ENCODE measurements at regions of chr1 and their contacts with region 1.

Region 1: DNA sequence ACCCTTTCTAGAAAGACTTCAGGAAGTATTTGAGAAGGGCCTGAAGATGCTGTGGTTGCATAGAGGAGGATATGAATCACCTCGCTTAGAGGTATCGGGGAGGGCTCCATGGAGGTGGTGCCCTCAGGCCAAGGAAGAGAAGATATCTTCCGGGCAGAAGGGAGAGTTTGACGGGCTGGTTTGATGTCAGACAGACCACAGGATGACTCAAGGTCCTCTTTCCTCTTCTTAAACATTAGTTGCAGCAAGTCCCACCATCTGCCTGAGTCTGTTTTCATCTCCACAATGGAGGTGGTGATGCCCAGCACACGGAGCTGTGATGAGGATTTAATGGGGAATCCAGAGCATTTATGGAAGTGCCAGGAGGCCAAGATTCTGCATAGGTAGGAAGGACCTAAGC is 25.1 kb upstream of the RUNX3 start:
- DNase-seq: peak; percentile 89
- ATAC-seq: peak; percentile 85
- H3K4me3 Mint-ChIP-seq: peak overlapping the region; percentile 94
- H3K27ac Mint-ChIP-seq: peak overlapping the region; percentile 99
- H3K4me1 Mint-ChIP-seq: peaks cover 93% of the 10 kb centered on the region
- H3K27me3 Mint-ChIP-seq: no peaks in the 10 kb centered on the region

Region 2: DNA sequence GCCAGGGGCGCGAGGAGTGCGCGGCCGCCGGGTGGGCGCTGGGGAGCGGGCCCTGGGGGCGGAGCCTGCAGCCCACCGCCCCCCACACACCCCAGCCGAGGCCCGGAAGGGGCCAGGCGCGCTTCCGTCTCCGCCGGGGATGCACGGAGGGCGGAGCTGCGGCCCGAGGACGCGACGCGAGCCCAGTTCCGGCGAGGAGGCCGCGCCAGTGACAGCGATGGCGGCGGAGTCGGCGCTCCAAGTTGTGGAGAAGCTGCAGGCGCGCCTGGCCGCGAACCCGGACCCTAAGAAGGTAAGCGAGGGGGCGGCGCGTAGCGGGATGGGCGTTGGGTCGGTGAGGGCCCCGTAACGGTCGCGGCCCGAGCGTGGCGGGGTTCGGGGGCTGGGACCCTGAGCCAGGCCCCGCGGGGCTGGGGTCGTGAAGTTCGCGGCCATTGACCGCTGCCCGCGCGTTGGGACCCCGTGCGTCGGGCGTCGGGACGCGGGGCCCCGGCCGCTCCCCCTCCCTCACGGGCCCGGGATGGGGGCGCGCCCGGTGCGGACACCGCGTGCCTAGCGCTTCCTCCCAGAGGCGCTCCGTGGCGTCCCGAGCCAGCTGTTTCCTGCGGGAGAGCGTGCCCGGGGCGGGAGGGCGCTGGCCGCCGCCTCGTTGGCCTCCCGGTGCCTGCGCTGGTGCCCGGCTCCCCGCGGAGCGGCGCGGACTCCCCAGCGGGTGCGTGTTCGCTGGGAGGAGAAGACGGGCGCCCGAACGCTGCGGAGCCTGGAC is 1211.7 kb before region 1 on chr1 and contains the start of gene ELOA:
- CTCF ChIA-PET with region 1: no interaction called
- POLR2A ChIA-PET with region 1: no interaction called
- intact Hi-C with region 1: no loop called
- DNase-seq: peak; percentile 88
- ATAC-seq: peak; percentile 94
- H3K4me3 Mint-ChIP-seq: peak within 1 kb of the TSS; percentile 87
- H3K27ac Mint-ChIP-seq: peak within 1 kb of the TSS; percentile 91
- H3K4me1 Mint-ChIP-seq: peaks cover 42% of the 10 kb centered on the region
- H3K27me3 Mint-ChIP-seq: no peaks in the 10 kb centered on the region
- total RNA-seq, gene ELOA: 34.5 to 38.6 TPM

Region 3: GRCh38 chr1:24919791-24920532 is 35.2 kb before region 1 on chr1:
- CTCF ChIA-PET with region 1: no interaction called
- POLR2A ChIA-PET with region 1: interaction called, 6 read pairs
- intact Hi-C with region 1: loop called in 1 of 2 experiments (anchors 1 kb)
- DNase-seq: peak; percentile 90
- ATAC-seq: peak; percentile 38
- H3K4me3 Mint-ChIP-seq: peak overlapping the region; percentile 54
- H3K27ac Mint-ChIP-seq: peak overlapping the region; percentile 97
- H3K4me1 Mint-ChIP-seq: peaks cover 69% of the 10 kb centered on the region
- H3K27me3 Mint-ChIP-seq: no peaks in the 10 kb centered on the region

Region 4: DNA sequence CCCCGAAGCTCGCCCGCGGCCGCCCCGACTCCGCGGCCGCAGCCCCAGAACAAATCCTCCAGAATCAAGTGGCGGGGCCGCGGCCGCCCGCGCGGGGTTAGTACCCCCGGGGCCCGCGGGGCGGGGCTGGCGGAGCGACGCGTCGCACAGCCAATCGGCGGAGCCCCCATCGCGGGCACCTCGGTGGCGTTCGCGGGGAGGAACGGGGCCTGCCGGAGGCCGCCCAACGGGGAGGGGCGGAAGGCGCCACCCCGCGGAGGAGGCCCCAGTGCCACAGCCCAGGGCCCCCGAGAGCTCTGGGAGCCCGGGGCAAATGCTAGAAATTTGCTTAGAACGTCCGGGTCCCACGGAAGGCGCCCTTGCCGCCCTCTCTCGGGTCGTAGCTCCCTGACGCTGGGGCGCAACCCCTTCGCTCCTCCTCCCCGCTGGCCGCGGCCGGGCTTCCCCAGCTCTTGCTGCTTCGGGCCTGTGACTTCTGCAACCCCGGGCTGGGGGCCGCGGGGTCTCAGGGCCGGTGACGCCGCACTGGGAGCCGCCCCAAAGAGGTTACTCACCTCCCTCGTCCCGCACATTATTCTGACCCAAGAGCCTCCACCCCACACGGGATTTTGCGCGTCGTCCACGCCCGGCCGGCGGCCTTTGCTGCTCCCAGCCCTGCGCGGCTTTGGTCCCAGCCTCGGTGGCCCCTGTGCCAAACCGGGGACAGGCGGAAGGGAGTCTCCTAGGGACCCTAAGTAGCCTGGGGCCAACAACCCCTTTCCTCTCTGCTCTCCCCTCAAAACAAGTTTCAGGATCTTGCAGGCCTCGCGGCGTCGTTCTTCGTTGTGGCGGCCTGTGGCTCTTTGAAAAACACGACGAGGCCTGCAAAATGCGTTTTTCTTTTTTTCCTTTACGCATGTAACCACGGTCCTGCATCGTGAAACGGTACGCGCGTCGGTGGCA is 24.7 kb before region 1 on chr1 and contains the start of gene RUNX3:
- CTCF ChIA-PET with region 1: interaction called, 17 read pairs
- POLR2A ChIA-PET with region 1: interaction called, 8 read pairs
- intact Hi-C with region 1: loop called (anchors 1 kb)
- DNase-seq: peak; percentile 96
- ATAC-seq: peak; percentile 88
- H3K4me3 Mint-ChIP-seq: peak within 1 kb of the TSS; percentile 80
- H3K27ac Mint-ChIP-seq: peak within 1 kb of the TSS; percentile 91
- H3K4me1 Mint-ChIP-seq: peaks cover 66% of the 10 kb centered on the region
- H3K27me3 Mint-ChIP-seq: no peaks in the 10 kb centered on the region
- total RNA-seq, gene RUNX3: 156 to 167 TPM

Region 5: DNA sequence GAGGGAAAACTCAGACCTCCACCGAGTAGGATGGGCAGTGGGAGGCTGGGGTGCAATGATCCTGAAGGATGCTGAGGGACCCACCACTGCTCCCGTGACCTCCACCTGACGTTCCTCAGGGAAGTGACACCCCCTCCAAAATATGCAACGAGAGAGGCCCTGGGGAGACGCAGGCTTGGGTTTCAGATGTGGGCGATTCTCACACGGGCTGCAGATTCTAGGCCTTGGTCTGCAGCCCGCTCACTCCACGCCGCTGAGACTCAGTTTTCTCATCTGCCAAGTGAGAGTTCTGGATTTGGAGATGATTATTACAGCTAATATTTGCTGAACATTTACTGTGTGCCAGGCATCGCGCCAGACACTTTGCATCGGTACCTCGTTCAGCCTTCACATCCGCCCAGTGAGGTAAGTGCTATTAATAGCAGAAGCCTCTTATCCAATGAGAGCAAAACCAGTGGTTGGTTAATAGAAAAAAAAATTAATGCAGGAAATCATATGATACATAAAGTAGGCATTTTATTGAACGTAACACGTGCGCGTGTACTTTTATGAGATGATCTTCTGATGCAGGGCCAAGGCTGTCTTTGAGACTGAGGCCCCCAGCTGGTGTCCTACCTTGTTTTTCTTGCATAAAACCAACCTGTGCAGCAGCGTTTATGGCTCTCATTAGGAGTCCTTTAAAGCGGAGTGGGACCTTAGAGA is 77.0 kb after region 1 on chr1:
- CTCF ChIA-PET with region 1: interaction called, 96 read pairs
- POLR2A ChIA-PET with region 1: interaction called, 4 read pairs
- intact Hi-C with region 1: loop called (anchors 1 to 2 kb)
- DNase-seq: peak; percentile 70
- ATAC-seq: peak; percentile 25
- H3K4me3 Mint-ChIP-seq: no peak overlapping the region
- H3K27ac Mint-ChIP-seq: no peak overlapping the region
- H3K4me1 Mint-ChIP-seq: peaks cover 74% of the 10 kb centered on the region
- H3K27me3 Mint-ChIP-seq: no peaks in the 10 kb centered on the region

Region 6: DNA sequence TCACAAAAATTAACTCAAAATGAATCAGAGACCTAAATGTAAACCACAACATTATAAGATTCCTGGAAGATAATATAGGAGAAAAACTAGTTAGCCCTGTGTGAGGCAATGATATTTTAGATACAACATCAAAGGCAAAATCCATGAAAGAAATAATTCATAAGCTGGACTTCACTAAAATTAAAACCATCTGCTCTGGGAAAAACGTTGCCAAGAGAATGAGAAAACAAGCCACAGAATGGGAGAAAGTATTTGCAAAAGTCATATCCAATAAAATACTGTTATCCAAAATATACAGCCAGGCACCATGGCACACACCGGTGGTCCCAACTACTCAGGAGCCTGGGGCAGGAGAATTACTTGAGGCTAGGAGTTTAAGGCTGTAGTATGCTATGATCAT is 206.8 kb after region 1 on chr1:
- CTCF ChIA-PET with region 1: no interaction called
- POLR2A ChIA-PET with region 1: no interaction called
- intact Hi-C with region 1: no loop called
- DNase-seq: no peak
- ATAC-seq: no peak
- H3K4me3 Mint-ChIP-seq: no peak overlapping the region
- H3K27ac Mint-ChIP-seq: no peak overlapping the region
- H3K4me1 Mint-ChIP-seq: no peaks in the 10 kb centered on the region
- H3K27me3 Mint-ChIP-seq: peaks cover 5% of the 10 kb centered on the region

Region 7: DNA sequence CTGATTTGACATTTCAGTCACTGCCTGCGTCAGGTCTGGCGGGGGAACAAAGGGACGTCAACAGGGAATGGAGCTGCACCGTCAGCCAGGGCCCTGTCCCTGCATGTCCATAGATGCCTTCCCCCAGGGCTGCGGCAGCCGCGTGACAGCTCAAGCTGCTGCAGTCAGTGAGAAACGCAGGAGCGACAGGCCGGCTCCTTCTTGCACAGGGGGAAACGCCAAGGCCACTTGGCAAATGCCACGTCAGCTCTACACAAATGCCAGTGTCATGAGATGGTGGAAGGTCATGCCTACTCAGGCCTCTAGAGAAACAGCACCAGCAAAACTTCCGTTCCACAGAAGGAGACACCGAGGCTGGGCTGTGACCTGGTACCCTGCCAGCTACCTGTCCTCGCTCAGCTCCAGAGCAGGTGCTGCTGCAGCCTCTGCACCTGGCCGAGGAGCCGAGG is 239.4 kb after region 1 on chr1:
- CTCF ChIA-PET with region 1: no interaction called
- POLR2A ChIA-PET with region 1: no interaction called
- intact Hi-C with region 1: no loop called
- DNase-seq: no peak
- ATAC-seq: no peak
- H3K4me3 Mint-ChIP-seq: no peak overlapping the region
- H3K27ac Mint-ChIP-seq: no peak overlapping the region
- H3K4me1 Mint-ChIP-seq: peaks cover 11% of the 10 kb centered on the region
- H3K27me3 Mint-ChIP-seq: peaks cover 7% of the 10 kb centered on the region

Region 8: DNA sequence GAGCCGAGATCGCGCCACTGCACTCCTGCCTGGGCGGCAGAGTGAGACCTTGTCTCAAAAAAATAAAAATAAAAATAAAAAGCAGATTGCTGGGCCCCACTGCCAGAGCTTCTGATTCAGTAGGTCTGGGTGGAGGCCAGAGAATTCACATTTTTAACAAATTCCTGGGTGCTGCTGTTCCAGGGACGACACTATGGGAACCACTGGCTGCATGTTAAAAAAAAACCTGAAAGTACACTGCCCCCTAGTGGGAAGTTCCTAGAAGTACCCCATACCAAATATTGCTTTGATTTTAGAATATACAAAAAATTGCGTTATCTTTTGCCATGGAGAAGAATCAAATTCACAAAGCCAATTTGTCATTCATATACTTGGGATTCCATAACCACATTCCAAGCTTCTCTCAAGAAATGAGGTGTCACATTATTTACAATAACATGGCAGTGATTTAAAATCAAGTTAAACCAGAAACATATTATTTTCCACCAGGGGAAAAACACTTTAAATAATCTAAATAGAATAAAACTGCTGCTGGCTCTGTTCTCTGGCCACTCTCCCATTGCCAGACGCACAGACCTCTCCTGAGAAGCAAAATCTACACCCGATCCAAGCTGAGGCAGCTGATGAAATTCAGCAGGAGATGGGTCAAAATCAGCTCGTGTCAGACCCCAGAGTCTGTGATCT is 249.8 kb after region 1 on chr1:
- CTCF ChIA-PET with region 1: no interaction called
- POLR2A ChIA-PET with region 1: no interaction called
- intact Hi-C with region 1: loop called in 1 of 2 experiments (anchors 10 kb)
- DNase-seq: peak; percentile 20
- ATAC-seq: peak; percentile 58
- H3K4me3 Mint-ChIP-seq: no peak overlapping the region
- H3K27ac Mint-ChIP-seq: no peak overlapping the region
- H3K4me1 Mint-ChIP-seq: no peaks in the 10 kb centered on the region
- H3K27me3 Mint-ChIP-seq: no peaks in the 10 kb centered on the region

Measured in activated CD4-positive, alpha-beta T cell treated with anti-CD3 and anti-CD28 coated beads for 36 hours (primary cell).